Activated CD8-positive, alpha-beta T cell treated with anti-CD3 and anti-CD28 coated beads, Interleukin-2, amount 10 ng/mL, durations not matched to agents 7 days and 5 days (primary cell): ENCODE measurements at regions of chr11 and their contacts with region 1.

Region 1: GRCh38 chr11:111454561-111455192 is 57.5 kb downstream of the BTG4 start:
- DNase-seq: peak; percentile 76
- ATAC-seq: peak; percentile 82
- H3K4me3 Mint-ChIP-seq: no peak overlapping the region
- H3K27ac Mint-ChIP-seq: no peak overlapping the region
- H3K4me1 Mint-ChIP-seq: peaks cover 5% of the 10 kb centered on the region
- H3K27me3 Mint-ChIP-seq: peaks cover 10% of the 10 kb centered on the region

Region 2: DNA sequence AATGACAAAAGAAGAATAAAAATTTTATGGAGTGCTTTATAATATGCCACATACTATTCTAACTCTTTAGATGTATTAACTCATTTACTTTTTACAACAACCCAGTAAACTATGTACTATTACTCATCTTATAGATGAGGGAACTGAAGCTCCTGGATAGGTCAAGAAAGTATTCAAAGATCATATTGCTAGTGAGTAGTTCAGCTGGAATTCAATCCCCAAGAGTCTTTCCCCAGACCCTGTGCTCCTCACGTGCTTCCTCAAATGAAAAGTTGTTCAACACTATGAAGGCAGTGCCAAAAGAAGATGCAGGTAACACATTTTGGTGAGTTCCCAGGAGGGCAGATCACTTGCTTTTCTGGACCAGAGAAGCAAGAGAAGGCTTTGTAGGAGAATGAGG is 10.7 kb after region 1 on chr11:
- CTCF ChIA-PET with region 1: interaction called, 14 read pairs
- POLR2A ChIA-PET with region 1: no interaction called
- DNase-seq: no peak
- ATAC-seq: no peak
- H3K4me3 Mint-ChIP-seq: no peak overlapping the region
- H3K27ac Mint-ChIP-seq: no peak overlapping the region
- H3K4me1 Mint-ChIP-seq: peaks cover 25% of the 10 kb centered on the region
- H3K27me3 Mint-ChIP-seq: peaks cover 3% of the 10 kb centered on the region

Region 3: GRCh38 chr11:111512296-111513239 is 57.9 kb after region 1 on chr11 and contains the start of gene BTG4:
- CTCF ChIA-PET with region 1: interaction called, 29 read pairs
- POLR2A ChIA-PET with region 1: interaction called, 4 read pairs
- DNase-seq: peak; percentile 46
- ATAC-seq: peak; percentile 78
- H3K4me3 Mint-ChIP-seq: peak within 1 kb of the TSS; percentile 69
- H3K27ac Mint-ChIP-seq: peak within 1 kb of the TSS; percentile 69
- H3K4me1 Mint-ChIP-seq: peaks cover 22% of the 10 kb centered on the region
- H3K27me3 Mint-ChIP-seq: peaks cover 24% of the 10 kb centered on the region
- total RNA-seq, gene BTG4: not detected

Region 4: GRCh38 chr11:111540114-111540936 is 85.6 kb after region 1 on chr11 and contains the start of gene LAYN:
- CTCF ChIA-PET with region 1: interaction called, 56 read pairs
- POLR2A ChIA-PET with region 1: interaction called, 26 read pairs
- DNase-seq: peak; percentile 77
- ATAC-seq: peak; percentile 66
- H3K4me3 Mint-ChIP-seq: peak within 1 kb of the TSS; percentile 73
- H3K27ac Mint-ChIP-seq: peak within 1 kb of the TSS; percentile 94
- H3K4me1 Mint-ChIP-seq: peaks cover 64% of the 10 kb centered on the region
- H3K27me3 Mint-ChIP-seq: peaks cover 10% of the 10 kb centered on the region
- total RNA-seq, gene LAYN: 11.1 to 12.8 TPM

Region 5: GRCh38 chr11:111777094-111778046 is 322.7 kb after region 1 on chr11:
- CTCF ChIA-PET with region 1: interaction called, 12 read pairs
- POLR2A ChIA-PET with region 1: no interaction called
- DNase-seq: peak; percentile 54
- ATAC-seq: peak; percentile 96
- H3K4me3 Mint-ChIP-seq: no peak overlapping the region
- H3K27ac Mint-ChIP-seq: no peak overlapping the region
- H3K4me1 Mint-ChIP-seq: no peaks in the 10 kb centered on the region
- H3K27me3 Mint-ChIP-seq: no peaks in the 10 kb centered on the region